A673 (cell line): ENCODE measurements at regions of chr1 and their contacts with region 1.

Region 1: GRCh38 chr1:161132410-161133219 is at the start of gene DEDD:
- DNase-seq: peak; percentile 99
- H3K4me3 ChIP-seq: peak within 1 kb of the TSS; percentile 98
- H3K27ac ChIP-seq: peak within 1 kb of the TSS; percentile 97
- H3K4me1 ChIP-seq: peaks cover 15% of the 10 kb centered on the region
- H3K27me3 ChIP-seq: no peaks in the 10 kb centered on the region
- CTCF ChIP-seq: peak; percentile 42; the same call in 1 of the 2 replicates
- total RNA-seq, gene DEDD: 53.0 and 54.6 TPM in 2 replicates

Region 2: GRCh38 chr1:161045750-161046571 is 86.7 kb before region 1 on chr1 and contains the start of gene USF1:
- CTCF ChIA-PET with region 1: interaction called, 3 read pairs
- POLR2A ChIA-PET with region 1: no interaction called
- intact Hi-C with region 1: loop called (anchors 2 kb)
- DNase-seq: peak; percentile 98
- H3K4me3 ChIP-seq: peak within 1 kb of the TSS; percentile 70
- H3K27ac ChIP-seq: peak within 1 kb of the TSS; percentile 85
- H3K4me1 ChIP-seq: no peaks in the 10 kb centered on the region
- H3K27me3 ChIP-seq: no peaks in the 10 kb centered on the region
- CTCF ChIP-seq: no peak
- total RNA-seq, gene USF1: 54.5 and 57.9 TPM in 2 replicates

Region 3: GRCh38 chr1:161153679-161154426 is 21.2 kb after region 1 on chr1 and contains the start of gene UFC1:
- CTCF ChIA-PET with region 1: no interaction called
- POLR2A ChIA-PET with region 1: interaction called, 4 read pairs
- intact Hi-C with region 1: loop called (anchors 2 kb)
- DNase-seq: peak; percentile 95
- H3K4me3 ChIP-seq: peak within 1 kb of the TSS; percentile 56
- H3K27ac ChIP-seq: peak within 1 kb of the TSS; percentile 95
- H3K4me1 ChIP-seq: peaks cover 6% of the 10 kb centered on the region
- H3K27me3 ChIP-seq: no peaks in the 10 kb centered on the region
- CTCF ChIP-seq: no peak
- total RNA-seq, gene UFC1: 73.6 and 82.7 TPM in 2 replicates

Region 4: GRCh38 chr1:161956097-161956496 is 823.5 kb after region 1 on chr1:
- CTCF ChIA-PET with region 1: no interaction called
- POLR2A ChIA-PET with region 1: no interaction called
- intact Hi-C with region 1: no loop called
- DNase-seq: peak; percentile 85
- H3K4me3 ChIP-seq: no peak overlapping the region
- H3K27ac ChIP-seq: peak overlapping the region; percentile 54
- H3K4me1 ChIP-seq: peaks cover 20% of the 10 kb centered on the region
- H3K27me3 ChIP-seq: no peaks in the 10 kb centered on the region
- CTCF ChIP-seq: no peak